ENCODE measurements at regions of chr15 and their contacts with region 1.

Region 1: DNA sequence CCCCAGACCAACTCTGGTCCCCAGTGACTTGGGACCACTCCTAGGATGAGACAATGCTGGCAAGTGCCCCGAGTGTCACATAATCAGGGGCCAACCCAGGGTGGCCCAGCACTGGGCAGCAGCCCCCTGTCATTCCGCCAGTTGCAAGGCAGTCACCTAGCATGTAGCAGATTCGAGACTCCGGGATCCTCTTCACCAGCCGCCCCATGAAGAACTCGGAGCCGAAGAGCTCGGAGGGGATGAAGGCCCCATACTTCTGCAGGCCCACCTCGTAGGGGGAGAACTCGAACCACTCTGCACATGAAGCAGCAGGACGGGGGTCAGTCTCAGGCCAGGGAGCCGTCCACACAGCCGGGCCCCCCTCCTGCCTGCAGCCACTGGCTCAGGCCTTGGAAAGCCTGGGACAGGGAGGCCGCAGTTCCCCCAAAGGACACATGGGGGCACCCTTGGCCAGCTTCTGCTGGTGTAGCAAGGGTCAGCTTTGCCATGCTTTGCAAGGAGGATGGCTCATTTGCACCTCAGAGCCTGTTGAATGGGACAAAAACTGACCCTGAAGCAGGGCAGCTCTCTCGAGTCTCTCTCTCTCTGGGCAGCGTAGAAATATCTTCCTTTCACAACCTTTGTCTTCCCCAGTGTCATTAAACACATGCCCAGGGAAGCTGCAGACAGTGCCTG is 17.0 kb upstream of the EHD4 start:
- DNase-seq: peak; percentile 76 to 96
- H3K4me3 ChIP-seq: no peak overlapping the region
- CTCF ChIP-seq: peak in 1 of 3 donors; percentile 92
- POLR2A ChIP-seq: no peak

Region 2: GRCh38 chr15:41870689-41871081 is 118.7 kb before region 1 on chr15:
- intact Hi-C with region 1: no loop called
- DNase-seq: no peak
- H3K4me3 ChIP-seq: no peak overlapping the region
- CTCF ChIP-seq: no peak
- POLR2A ChIP-seq: no peak

Region 3: GRCh38 chr15:42056934-42057779 is 67.8 kb after region 1 on chr15:
- intact Hi-C with region 1: loop called (anchors 5 kb)
- DNase-seq: peak; percentile 84 to 91
- H3K4me3 ChIP-seq: no peak overlapping the region
- CTCF ChIP-seq: no peak
- POLR2A ChIP-seq: no peak

Region 4: GRCh38 chr15:42118650-42119445 is 129.5 kb after region 1 on chr15:
- intact Hi-C with region 1: no loop called
- DNase-seq: peak in 1 of 2 donors; percentile 11
- H3K4me3 ChIP-seq: no peak overlapping the region
- CTCF ChIP-seq: no peak
- POLR2A ChIP-seq: no peak

Region 5: GRCh38 chr15:42140383-42141070 is 151.1 kb after region 1 on chr15:
- intact Hi-C with region 1: loop called (anchors 10 kb)
- DNase-seq: peak in 1 of 2 donors; percentile 70
- H3K4me3 ChIP-seq: no peak overlapping the region
- CTCF ChIP-seq: no peak
- POLR2A ChIP-seq: no peak